Right lobe of liver (tissue), 6 donors: ENCODE measurements at regions of chr20 and their contacts with region 1.

Region 1: DNA sequence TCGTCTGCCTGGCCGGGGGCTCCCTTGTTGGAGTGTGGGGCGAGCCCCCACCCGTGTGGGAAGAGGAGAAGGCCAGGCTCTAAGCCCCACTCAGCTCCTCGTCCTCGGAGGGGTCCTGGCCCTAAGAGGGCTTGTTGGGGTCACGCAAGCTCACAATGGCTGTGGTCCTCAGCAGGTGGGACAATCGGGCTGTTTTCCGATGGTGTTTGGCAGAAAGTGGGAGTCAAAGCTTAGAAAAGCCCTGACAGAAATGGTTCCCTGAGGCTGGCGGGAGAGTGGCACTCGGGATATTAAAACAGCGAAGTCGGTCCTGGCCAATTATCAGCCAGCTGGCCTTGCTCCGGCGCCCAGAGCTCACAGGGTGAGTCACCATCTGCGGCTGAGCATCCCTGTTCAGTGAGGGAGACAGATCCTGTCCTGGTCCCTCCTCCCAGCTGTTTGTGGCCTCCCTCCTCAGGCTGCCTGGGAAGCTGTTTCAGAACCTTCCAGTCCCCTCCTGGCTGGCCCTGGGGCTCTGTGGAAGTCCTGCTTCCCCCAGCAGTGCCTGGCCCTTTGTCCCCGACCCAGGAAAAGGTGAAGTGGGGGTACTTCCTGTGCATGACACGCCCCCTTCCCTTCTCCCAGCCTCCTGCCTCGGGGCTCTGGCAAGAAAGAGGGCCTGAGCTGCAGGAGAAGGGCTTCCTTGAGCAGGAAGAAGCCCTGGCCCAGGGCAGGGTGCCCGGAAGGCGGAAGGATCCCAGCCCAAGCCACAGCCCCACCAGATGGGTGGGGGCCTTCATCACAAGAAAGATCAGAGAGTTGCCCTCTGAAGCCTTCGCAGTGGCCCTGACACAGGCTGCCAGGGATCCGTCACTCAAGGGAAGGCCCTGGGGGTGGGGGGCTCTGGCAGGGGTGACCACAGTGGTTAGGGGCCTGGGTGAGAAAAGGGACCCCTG is 53.6 kb upstream of the BHLHE23 start:
- DNase-seq: peak; percentile 14 to 41 (median 34)
- ATAC-seq: no peak
- H3K4me3 ChIP-seq: no peak overlapping the region
- H3K27ac ChIP-seq: no peak overlapping the region
- H3K4me1 ChIP-seq: peaks cover 0 to 6% (median 0%) of the 10 kb centered on the region in 4 donors
- H3K27me3 ChIP-seq: no peaks in the 10 kb centered on the region
- CTCF ChIP-seq: no peak
- POLR2A ChIP-seq: no peak

Region 2: GRCh38 chr20:63129991-63130657 is 69.8 kb after region 1 on chr20:
- intact Hi-C with region 1: no loop called
- DNase-seq: peak; percentile 3 to 28 (median 22)
- ATAC-seq: no peak
- H3K4me3 ChIP-seq: no peak overlapping the region
- H3K27ac ChIP-seq: no peak overlapping the region
- H3K4me1 ChIP-seq: no peaks in the 10 kb centered on the region
- H3K27me3 ChIP-seq: no peaks in the 10 kb centered on the region
- CTCF ChIP-seq: no peak
- POLR2A ChIP-seq: no peak

Region 3: GRCh38 chr20:63178889-63179686 is 118.8 kb after region 1 on chr20:
- intact Hi-C with region 1: loop called in 1 of 2 experiments (anchors 5 kb)
- DNase-seq: peak in 1 of 3 donors; percentile 38
- ATAC-seq: peak in 3 of 4 donors; percentile 28 to 48 (median 30)
- H3K4me3 ChIP-seq: no peak overlapping the region
- H3K27ac ChIP-seq: no peak overlapping the region
- H3K4me1 ChIP-seq: peaks cover 0 to 16% (median 0%) of the 10 kb centered on the region in 4 donors
- H3K27me3 ChIP-seq: peaks cover 13 to 21% of the 10 kb centered on the region in 2 donors
- CTCF ChIP-seq: peak; percentile 19 to 57 (median 44)
- POLR2A ChIP-seq: no peak

Region 4: DNA sequence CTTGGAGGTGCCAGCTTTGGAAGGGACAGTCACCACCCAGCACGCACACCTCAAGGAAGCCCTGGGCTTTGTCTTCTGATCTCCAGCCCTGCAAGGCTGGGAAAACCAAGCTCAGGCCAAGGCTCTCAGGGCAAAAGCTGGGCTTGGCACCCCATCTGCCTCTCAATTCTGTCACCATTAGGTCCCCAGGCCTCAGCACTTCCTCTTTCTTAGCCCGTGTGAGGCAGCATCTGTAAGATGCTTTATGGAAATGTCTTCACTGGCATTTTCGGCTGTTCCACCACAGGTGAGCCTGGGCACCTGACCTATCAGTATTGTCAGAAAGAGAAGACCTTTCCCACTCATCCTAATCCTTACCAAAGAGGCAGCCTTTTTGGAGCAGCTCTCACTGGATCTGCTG is 542.0 kb after region 1 on chr20:
- intact Hi-C with region 1: no loop called
- DNase-seq: peak in 1 of 3 donors; percentile 6
- ATAC-seq: no peak
- H3K4me3 ChIP-seq: no peak overlapping the region
- H3K27ac ChIP-seq: no peak overlapping the region
- H3K4me1 ChIP-seq: no peaks in the 10 kb centered on the region
- H3K27me3 ChIP-seq: no peaks in the 10 kb centered on the region
- CTCF ChIP-seq: no peak
- POLR2A ChIP-seq: no peak